Aorta (tissue), 5 donors: ENCODE measurements at regions of chr18 and their contacts with region 1.

Region 1: GRCh38 chr18:47175908-47176575 is at the start of gene IER3IP1:
- DNase-seq: peak; percentile 95 to 98
- ATAC-seq: peak; percentile 98
- H3K4me3 ChIP-seq: peak within 1 kb of the TSS; percentile 95 to 100
- H3K27ac ChIP-seq: peak within 1 kb of the TSS in 1 of 2 donors; percentile 66
- H3K4me1 ChIP-seq: peaks cover 0 to 2% of the 10 kb centered on the region in 2 donors
- H3K27me3 ChIP-seq: no peaks in the 10 kb centered on the region
- total RNA-seq, gene IER3IP1: 9.8 to 10.6 TPM

Region 2: GRCh38 chr18:47143899-47144485 is 32.0 kb before region 1 on chr18:
- intact Hi-C with region 1: loop called in 1 of 2 experiments (anchors 5 kb)
- DNase-seq: no peak
- ATAC-seq: no peak
- H3K4me3 ChIP-seq: no peak overlapping the region
- H3K27ac ChIP-seq: no peak overlapping the region
- H3K4me1 ChIP-seq: no peaks in the 10 kb centered on the region
- H3K27me3 ChIP-seq: no peaks in the 10 kb centered on the region

Region 3: GRCh38 chr18:47150029-47150823 is 25.8 kb before region 1 on chr18 and contains the start of gene HDHD2:
- intact Hi-C with region 1: loop called in 1 of 2 experiments (anchors 2 kb)
- DNase-seq: peak; percentile 92 to 95
- ATAC-seq: peak; percentile 96
- H3K4me3 ChIP-seq: peak within 1 kb of the TSS; percentile 62 to 94
- H3K27ac ChIP-seq: peak within 1 kb of the TSS; percentile 78 to 98
- H3K4me1 ChIP-seq: no peaks in the 10 kb centered on the region
- H3K27me3 ChIP-seq: no peaks in the 10 kb centered on the region
- total RNA-seq, gene HDHD2: 30.1 to 34.1 TPM